ENCODE measurements at regions of chr9 and their contacts with region 1.

Region 1: GRCh38 chr9:4679268-4680172 is at the start of gene CDC37L1:
- DNase-seq: peak; percentile 94 to 99 (median 98)
- H3K4me3 ChIP-seq: peak within 1 kb of the TSS; percentile 63 to 99 (median 92)
- H3K27ac ChIP-seq: peak within 1 kb of the TSS; percentile 88 to 100 (median 97)
- H3K27me3 ChIP-seq: no peaks in the 10 kb centered on the region
- CTCF ChIP-seq: peak; percentile 8 to 81 (median 66)
- total RNA-seq, gene CDC37L1: 14.4 to 43.2 (median 28.4) TPM

Region 2: GRCh38 chr9:3525836-3526164 is 1153.7 kb before region 1 on chr9 and contains the start of gene RFX3:
- intact Hi-C with region 1: loop called in 1 of 2 experiments (anchors 5 kb)
- DNase-seq: peak; percentile 77 to 92 (median 87)
- H3K4me3 ChIP-seq: peak within 1 kb of the TSS; percentile 71 to 99 (median 93)
- H3K27ac ChIP-seq: peak within 1 kb of the TSS; percentile 97 to 100 (median 100)
- H3K27me3 ChIP-seq: no peaks in the 10 kb centered on the region
- CTCF ChIP-seq: peak in 1 of 56 donors; percentile 6
- total RNA-seq, gene RFX3: 34.7 to 99.1 (median 60.1) TPM

Region 3: GRCh38 chr9:4413856-4414455 is 265.6 kb before region 1 on chr9:
- intact Hi-C with region 1: no loop called
- DNase-seq: no peak
- H3K4me3 ChIP-seq: no peak overlapping the region
- H3K27ac ChIP-seq: no peak overlapping the region
- H3K27me3 ChIP-seq: no peaks in the 10 kb centered on the region
- CTCF ChIP-seq: no peak

Region 4: GRCh38 chr9:4486176-4486575 is 193.3 kb before region 1 on chr9:
- intact Hi-C with region 1: no loop called
- DNase-seq: no peak
- H3K4me3 ChIP-seq: no peak overlapping the region
- H3K27ac ChIP-seq: no peak overlapping the region
- H3K27me3 ChIP-seq: peaks cover 0 to 6% (median 0%) of the 10 kb centered on the region in 45 donors
- CTCF ChIP-seq: no peak

Region 5: DNA sequence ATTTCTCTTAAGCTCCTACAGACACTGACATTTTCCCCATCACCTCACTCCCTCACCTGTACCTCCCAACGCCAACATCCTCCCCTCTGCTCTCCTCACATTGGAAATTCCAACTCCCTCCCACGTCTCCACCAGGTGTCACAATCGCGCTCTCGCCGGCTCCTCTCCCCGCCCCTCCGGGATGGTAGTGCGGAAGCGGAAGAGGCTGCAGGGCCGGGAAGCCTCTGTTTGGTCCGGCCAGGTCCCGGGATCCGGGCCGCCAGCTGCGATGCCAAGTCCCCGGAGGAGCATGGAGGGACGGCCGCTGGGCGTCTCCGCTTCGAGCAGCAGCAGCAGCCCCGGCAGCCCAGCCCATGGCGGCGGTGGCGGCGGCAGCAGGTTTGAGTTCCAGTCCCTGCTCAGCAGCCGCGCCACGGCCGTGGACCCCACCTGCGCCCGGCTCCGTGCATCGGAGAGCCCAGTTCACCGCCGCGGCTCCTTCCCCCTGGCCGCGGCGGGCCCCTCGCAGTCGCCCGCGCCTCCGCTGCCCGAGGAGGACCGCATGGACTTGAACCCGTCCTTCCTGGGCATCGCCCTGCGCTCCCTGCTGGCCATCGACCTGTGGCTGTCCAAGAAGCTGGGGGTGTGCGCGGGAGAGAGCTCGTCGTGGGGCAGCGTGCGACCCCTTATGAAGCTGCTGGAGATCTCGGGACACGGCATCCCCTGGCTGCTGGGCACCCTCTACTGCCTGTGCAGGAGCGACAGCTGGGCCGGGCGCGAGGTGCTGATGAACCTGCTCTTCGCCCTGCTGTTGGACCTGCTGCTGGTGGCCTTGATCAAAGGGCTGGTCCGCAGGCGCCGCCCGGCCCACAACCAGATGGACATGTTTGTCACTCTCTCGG is 17.2 kb before region 1 on chr9 and contains the start of gene PLPP6:
- intact Hi-C with region 1: loop called (anchors 2 kb)
- DNase-seq: peak; percentile 63 to 94 (median 82)
- H3K4me3 ChIP-seq: peak within 1 kb of the TSS; percentile 62 to 96 (median 83)
- H3K27ac ChIP-seq: peak within 1 kb of the TSS in 56 of 59 donors; percentile 2 to 90 (median 78)
- H3K27me3 ChIP-seq: no peaks in the 10 kb centered on the region
- CTCF ChIP-seq: peak; percentile 30 to 79 (median 64)
- total RNA-seq, gene PLPP6: 3.1 to 11.2 (median 6.9) TPM

Region 6: DNA sequence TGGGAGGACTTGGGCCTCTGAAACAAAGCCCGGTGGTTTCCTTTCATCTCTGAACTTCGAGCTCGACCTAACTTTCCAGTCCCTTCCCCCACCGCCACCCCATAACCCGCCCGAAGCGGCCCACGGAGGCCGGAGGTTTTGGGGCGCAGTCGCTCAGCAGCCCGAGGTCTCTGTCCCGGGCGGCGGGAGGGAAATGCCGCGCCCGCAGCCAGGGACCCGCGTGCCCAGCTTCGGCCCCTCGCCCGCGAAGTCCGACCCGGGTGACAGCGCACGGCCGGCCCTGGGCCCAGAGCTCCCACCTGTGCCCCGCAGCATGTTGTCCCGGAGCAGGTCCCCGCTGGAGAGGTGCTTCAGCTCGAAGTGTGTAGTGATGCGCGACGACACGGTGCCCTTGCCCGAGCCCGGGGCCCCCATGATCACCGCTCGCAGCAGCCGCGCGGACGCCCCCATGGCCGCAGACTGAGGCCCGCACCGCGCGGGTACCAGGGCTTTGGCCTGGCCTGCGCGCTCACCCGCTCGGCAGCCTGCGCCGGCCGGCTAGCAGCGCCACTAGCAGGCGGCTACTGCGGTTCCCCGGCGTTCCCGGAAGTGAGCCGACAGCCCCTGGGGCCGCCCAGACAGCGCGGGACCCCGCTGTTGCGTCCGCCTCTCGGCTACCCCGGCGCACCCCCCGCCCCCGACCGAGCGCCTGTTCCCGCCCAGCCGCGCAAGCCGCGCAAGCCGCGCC is 61.3 kb after region 1 on chr9 and contains the start of gene AK3:
- intact Hi-C with region 1: loop called (anchors 2 to 5 kb)
- DNase-seq: peak; percentile 58 to 92 (median 81)
- H3K4me3 ChIP-seq: peak within 1 kb of the TSS; percentile 64 to 99 (median 91)
- H3K27ac ChIP-seq: peak within 1 kb of the TSS; percentile 9 to 96 (median 90)
- H3K27me3 ChIP-seq: no peaks in the 10 kb centered on the region
- CTCF ChIP-seq: peak in 50 of 56 donors; percentile 13 to 70 (median 46)
- total RNA-seq, gene AK3: 30.5 to 87.1 (median 48.8) TPM

Region 7: DNA sequence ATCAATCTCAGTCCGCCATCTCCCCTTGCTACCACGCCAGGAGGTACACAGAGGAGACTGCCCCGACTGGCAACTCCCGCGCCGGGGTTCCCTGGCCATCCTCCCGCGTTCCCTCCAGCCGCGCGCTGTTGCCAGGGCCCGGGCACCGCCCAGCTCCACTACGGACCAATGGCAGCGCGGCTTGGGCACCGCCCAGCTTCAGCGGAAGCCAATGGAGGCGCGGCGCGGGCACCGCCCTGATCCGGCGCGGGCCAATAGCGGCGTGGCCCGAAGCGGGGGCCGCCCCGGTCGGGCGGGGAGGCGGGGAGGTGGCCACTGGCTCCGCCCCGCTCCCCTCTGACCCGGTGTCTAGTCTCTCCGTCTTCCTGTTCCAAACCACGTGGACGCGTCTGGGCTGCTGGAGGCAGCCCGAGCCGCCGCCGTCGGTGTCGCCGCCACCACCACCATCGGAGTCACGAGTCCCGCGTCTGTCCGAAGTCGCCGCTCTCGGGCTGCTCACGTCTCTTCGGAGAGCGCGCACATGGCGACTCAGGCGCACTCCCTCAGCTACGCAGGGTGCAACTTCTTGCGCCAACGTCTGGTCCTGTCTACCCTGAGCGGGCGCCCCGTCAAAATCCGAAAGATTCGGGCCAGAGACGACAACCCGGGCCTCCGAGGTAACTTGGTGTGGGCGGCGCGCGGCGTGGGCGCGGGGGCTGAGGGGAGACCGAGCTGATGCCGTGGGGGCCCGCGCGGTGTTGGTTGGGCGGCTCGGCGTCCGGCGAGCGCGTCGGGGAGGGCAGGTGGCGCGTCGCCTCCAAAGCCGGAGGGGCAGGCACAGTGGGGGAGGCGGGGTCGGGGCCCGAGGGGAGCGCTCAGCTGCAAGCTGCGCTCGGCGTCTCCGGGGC is 113.3 kb after region 1 on chr9 and contains the start of gene RCL1:
- intact Hi-C with region 1: loop called in 1 of 2 experiments (anchors 1 kb)
- DNase-seq: peak; percentile 94 to 100 (median 97)
- H3K4me3 ChIP-seq: peak within 1 kb of the TSS; percentile 67 to 99 (median 92)
- H3K27ac ChIP-seq: peak within 1 kb of the TSS; percentile 16 to 93 (median 82)
- H3K27me3 ChIP-seq: no peaks in the 10 kb centered on the region
- CTCF ChIP-seq: peak in 16 of 56 donors; percentile 8 to 49 (median 17)
- total RNA-seq, gene RCL1: 17.9 to 36.6 (median 25.8) TPM

Region 8: GRCh38 chr9:5437254-5438216 is 758.0 kb after region 1 on chr9 and contains the start of gene PLGRKT:
- intact Hi-C with region 1: loop called in 1 of 2 experiments (anchors 5 kb)
- DNase-seq: peak; percentile 93 to 99 (median 97)
- H3K4me3 ChIP-seq: peak within 1 kb of the TSS; percentile 58 to 98 (median 83)
- H3K27ac ChIP-seq: peak within 1 kb of the TSS; percentile 73 to 99 (median 93)
- H3K27me3 ChIP-seq: no peaks in the 10 kb centered on the region
- CTCF ChIP-seq: peak in 51 of 56 donors; percentile 6 to 66 (median 46)
- total RNA-seq, gene PLGRKT: 4.1 to 17.5 (median 10.1) TPM

Region 9: GRCh38 chr9:5628530-5629311 is 949.2 kb after region 1 on chr9 and contains the start of gene RIC1:
- intact Hi-C with region 1: loop called in 1 of 2 experiments (anchors 5 kb)
- DNase-seq: peak; percentile 81 to 93 (median 90)
- H3K4me3 ChIP-seq: peak within 1 kb of the TSS; percentile 58 to 100 (median 94)
- H3K27ac ChIP-seq: peak within 1 kb of the TSS; percentile 75 to 98 (median 93)
- H3K27me3 ChIP-seq: no peaks in the 10 kb centered on the region
- CTCF ChIP-seq: peak in 21 of 56 donors; percentile 5 to 45 (median 25)
- total RNA-seq, gene RIC1: 14.5 to 24.0 (median 19.2) TPM